Activated CD8-positive, alpha-beta T cell treated with anti-CD3 and anti-CD28 coated beads, Interleukin-2, amount 10 ng/mL, durations not matched to agents 7 days and 5 days (primary cell): ENCODE measurements at regions of chr1 and their contacts with region 1.

Region 1: DNA sequence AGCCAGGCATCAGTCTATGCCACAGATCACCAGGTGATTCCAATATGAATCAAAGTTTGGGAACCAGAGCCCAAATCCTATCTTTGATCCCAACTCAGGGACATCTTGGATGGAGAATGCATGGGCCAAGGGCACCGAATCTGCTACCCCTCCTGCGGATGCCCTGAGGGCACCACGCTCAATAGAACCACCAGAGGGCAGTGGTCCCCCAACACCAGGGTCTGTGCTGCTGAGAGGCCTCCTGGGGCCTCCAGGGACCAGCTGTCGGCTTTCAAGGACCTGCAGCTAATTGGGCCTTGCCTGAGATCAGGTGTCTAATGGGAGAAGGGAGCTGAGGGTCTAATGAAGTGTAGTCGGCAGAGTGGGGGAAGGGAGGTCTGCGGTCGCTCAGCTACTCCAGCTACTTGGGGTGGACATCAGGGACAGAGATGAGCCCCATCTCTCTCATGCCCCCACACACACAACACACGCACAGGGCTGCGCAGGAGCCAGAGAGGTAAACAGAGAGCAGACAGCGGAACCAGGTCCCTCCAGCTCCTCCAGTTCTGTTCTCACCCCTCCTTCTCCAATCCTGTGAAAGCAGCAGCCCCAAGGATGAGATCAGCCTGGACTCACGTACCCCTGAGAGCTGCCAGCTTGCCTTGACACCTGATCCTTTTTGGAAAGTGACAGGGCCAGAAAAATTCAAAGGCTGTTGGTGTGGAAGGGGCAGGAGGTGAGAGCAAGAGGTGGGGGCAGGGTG is 34.9 kb upstream of the PPP1R15B start:
- DNase-seq: peak; percentile 84
- ATAC-seq: peak; percentile 93
- H3K4me3 Mint-ChIP-seq: no peak overlapping the region
- H3K27ac Mint-ChIP-seq: peak overlapping the region; percentile 81
- H3K4me1 Mint-ChIP-seq: peaks cover 30% of the 10 kb centered on the region
- H3K27me3 Mint-ChIP-seq: no peaks in the 10 kb centered on the region

Region 2: DNA sequence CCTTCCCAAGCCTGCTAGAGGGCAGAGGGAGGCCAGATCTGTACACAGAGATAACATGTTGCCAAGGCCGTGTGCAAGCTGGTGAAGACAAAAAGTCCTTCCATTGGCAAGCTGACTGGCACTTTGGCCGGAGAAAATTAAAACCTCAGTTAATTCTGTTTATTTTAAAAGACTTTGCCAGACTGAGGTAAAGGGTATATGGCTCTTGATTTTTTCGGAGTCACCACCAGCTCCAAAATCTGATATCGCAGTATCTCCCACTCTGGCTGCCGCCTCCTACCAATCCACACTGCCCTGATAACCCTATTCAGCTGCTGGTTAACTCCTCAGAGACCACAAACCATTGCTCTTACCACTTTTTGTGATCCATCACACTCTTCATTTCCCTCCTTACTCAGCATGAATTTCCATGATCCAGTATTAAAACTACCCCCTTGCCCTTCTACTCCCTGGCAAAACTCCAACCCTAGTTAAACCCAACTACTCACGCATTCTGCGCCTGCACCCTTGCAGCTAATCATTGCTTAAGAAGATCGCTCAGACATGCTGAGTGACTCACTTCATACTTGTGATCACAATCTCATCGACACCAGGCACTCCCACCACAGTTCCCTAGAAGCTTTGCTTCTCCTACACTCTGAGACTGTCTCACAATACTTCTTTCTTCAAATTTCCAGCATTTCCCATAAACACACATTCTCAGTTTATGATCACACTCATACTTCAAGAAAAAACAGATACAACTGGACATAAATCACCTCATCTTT is 29.1 kb before region 1 on chr1:
- CTCF ChIA-PET with region 1: interaction called, 11 read pairs
- POLR2A ChIA-PET with region 1: no interaction called
- DNase-seq: no peak
- ATAC-seq: peak; percentile 43
- H3K4me3 Mint-ChIP-seq: no peak overlapping the region
- H3K27ac Mint-ChIP-seq: no peak overlapping the region
- H3K4me1 Mint-ChIP-seq: peaks cover 35% of the 10 kb centered on the region
- H3K27me3 Mint-ChIP-seq: no peaks in the 10 kb centered on the region

Region 3: GRCh38 chr1:204465546-204466415 is 19.2 kb after region 1 on chr1:
- CTCF ChIA-PET with region 1: interaction called, 21 read pairs
- POLR2A ChIA-PET with region 1: no interaction called
- DNase-seq: no peak
- ATAC-seq: no peak
- H3K4me3 Mint-ChIP-seq: no peak overlapping the region
- H3K27ac Mint-ChIP-seq: peak overlapping the region; percentile 8
- H3K4me1 Mint-ChIP-seq: peaks cover 47% of the 10 kb centered on the region
- H3K27me3 Mint-ChIP-seq: no peaks in the 10 kb centered on the region

Region 4: GRCh38 chr1:204487256-204487615 is 40.7 kb after region 1 on chr1:
- CTCF ChIA-PET with region 1: interaction called, 1,090 read pairs
- POLR2A ChIA-PET with region 1: no interaction called
- DNase-seq: no peak
- ATAC-seq: no peak
- H3K4me3 Mint-ChIP-seq: no peak overlapping the region
- H3K27ac Mint-ChIP-seq: no peak overlapping the region
- H3K4me1 Mint-ChIP-seq: peaks cover 25% of the 10 kb centered on the region
- H3K27me3 Mint-ChIP-seq: no peaks in the 10 kb centered on the region

Region 5: DNA sequence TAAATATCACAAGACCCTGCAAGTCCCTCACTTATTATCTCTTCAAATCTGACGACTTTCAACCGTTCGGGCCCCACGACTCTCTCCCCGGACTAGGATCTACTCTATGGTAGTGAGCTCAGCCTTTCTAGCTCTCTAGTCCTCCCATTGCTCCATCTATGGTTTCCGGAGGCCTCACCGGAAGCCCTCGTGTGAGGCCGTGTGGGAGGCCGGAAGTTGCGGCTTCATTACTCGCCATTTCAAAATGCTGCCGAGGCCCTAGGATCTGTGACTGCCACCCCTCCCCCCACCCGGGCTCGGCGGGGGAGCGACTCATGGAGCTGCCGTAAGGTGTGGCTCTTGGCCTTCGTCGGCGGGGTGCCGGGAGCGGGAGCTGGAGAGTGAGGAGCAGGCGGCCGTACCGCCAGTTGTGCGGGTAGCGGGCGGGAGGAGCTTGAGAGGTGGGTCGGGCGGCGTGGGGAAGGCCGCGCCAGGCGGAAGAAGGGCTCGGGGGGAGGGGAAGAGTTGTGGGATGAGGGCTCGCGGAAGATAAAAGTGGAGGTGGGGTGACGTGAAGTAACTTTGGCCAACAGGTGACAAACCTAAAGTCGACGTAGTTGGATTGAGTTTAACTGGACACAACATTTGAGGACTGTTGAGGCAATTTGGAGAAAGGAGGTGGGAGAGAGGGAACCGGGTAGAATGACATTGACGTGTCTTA is 69.8 kb after region 1 on chr1 and contains the start of gene MDM4:
- CTCF ChIA-PET with region 1: interaction called, 12 read pairs
- POLR2A ChIA-PET with region 1: interaction called, 3 read pairs
- DNase-seq: peak; percentile 97
- ATAC-seq: peak; percentile 83
- H3K4me3 Mint-ChIP-seq: no peak within 1 kb of the TSS
- H3K27ac Mint-ChIP-seq: no peak within 1 kb of the TSS
- H3K4me1 Mint-ChIP-seq: peaks cover 65% of the 10 kb centered on the region
- H3K27me3 Mint-ChIP-seq: no peaks in the 10 kb centered on the region
- total RNA-seq, gene MDM4: 72.2 to 72.4 TPM